A549 (cell line): ENCODE measurements at regions of chr19 and their contacts with region 1.

Region 1: DNA sequence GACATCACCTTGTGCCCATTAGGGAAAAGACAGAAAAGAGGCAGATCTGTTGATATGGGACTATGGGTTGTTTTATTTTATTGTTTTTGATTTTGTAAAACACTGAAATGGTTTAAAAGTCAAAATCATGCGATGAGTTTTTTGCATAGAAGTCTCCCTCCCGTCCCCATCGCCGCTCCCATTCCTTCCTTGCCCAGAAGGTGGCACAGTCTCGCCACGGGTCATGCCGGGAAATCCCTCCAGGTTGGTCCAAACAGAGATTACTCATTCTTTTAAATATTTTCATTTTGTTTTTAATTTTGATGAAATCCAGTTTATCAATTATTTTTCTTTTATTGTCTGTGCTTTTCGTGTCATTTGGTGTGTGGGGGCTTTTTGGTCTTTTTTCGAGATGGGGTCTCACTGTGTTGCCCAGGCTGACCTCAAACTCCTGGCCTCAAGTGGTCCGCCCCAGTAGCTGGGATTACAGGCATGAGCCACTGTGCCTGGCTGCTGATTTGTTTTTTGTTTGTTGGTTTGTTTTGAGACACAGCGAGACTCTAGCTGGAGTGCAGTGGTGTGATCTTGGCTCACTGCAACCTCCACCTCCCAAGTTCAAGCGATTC is 9.2 kb downstream of the PGPEP1 start:
- DNase-seq: peak; percentile 61 to 69
- ATAC-seq: peak; percentile 68 to 87; a peak in 4 of 6 replicates
- H3K4me3 ChIP-seq: no peak overlapping the region
- H3K27ac ChIP-seq: peak overlapping the region; percentile 67 to 77
- H3K4me1 ChIP-seq: peaks cover 7% of the 10 kb centered on the region; the same call in 1 of the 3 replicates
- CTCF ChIP-seq: peak; percentile 84
- EP300 ChIP-seq: no peak
- POLR2A ChIP-seq: no peak
- RAD21 ChIP-seq: peak; percentile 93

Region 2: GRCh38 chr19:18333662-18334389 is 15.8 kb before region 1 on chr19:
- CTCF ChIA-PET with region 1: interaction called, 24 read pairs
- POLR2A ChIA-PET with region 1: no interaction called
- DNase-seq: no peak
- ATAC-seq: no peak
- H3K4me3 ChIP-seq: no peak overlapping the region
- H3K27ac ChIP-seq: no peak overlapping the region
- H3K4me1 ChIP-seq: peaks cover 13% of the 10 kb centered on the region
- CTCF ChIP-seq: no peak
- EP300 ChIP-seq: no peak
- POLR2A ChIP-seq: no peak
- RAD21 ChIP-seq: no peak

Region 3: GRCh38 chr19:18364826-18365528 is 15.4 kb after region 1 on chr19:
- CTCF ChIA-PET with region 1: interaction called, 66 read pairs
- POLR2A ChIA-PET with region 1: no interaction called
- DNase-seq: peak; percentile 71 to 98
- ATAC-seq: peak; percentile 82 to 83
- H3K4me3 ChIP-seq: no peak overlapping the region
- H3K27ac ChIP-seq: peak overlapping the region; percentile 97 to 99
- H3K4me1 ChIP-seq: peaks cover 45% of the 10 kb centered on the region
- CTCF ChIP-seq: no peak
- EP300 ChIP-seq: peak; percentile 97 to 98
- POLR2A ChIP-seq: no peak
- RAD21 ChIP-seq: no peak; a peak in 2 of 5 replicates

Region 4: DNA sequence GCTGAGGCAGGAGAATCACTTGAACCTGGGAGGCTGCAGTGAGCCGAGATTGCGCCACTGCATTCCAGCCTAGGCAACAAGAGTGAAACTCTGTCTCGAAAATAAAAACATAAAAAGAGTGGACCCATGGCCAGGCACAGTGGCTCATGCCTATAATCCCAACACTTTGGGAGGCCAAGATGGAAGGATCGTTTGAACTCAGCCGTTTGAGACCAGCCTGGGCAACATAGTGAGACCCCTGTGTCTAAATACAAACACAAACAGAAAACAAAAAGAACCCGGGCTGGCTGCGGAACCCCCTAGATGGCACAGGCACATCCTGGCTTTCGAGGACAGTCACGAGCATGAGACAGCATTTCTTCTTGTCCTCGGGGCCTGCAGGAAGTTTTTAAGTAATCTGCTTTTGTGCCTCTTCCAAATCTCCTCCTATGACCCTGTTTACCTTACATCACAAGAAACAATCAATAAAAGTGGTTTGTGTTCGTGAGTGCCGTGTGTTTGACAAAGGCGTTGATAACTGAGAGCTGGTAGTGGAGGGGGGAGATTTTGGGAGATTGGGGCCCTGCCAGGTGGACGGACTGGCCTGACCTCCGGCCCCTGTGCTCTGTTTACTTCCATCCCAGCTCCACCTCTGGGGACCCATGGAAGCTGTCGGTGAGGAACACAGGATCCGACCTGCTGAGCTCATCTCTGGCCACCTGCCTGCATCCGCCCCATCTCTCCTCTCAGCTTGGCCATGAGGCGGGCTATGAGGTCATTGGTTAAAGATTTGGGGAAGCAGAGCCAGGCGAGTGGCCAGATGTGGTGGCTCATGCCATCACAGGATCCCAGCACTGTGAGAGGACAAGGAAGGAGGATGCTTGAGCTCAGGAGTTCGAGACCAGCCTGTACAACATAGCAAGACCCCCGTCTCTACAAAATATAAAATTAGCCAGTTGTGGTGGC is 30.4 kb after region 1 on chr19:
- CTCF ChIA-PET with region 1: interaction called, 14 read pairs
- POLR2A ChIA-PET with region 1: interaction called, 4 read pairs
- DNase-seq: peak; percentile 84 to 99
- ATAC-seq: peak; percentile 93 to 98
- H3K4me3 ChIP-seq: no peak overlapping the region
- H3K27ac ChIP-seq: peak overlapping the region; percentile 99 to 100
- H3K4me1 ChIP-seq: peaks cover 73% of the 10 kb centered on the region
- CTCF ChIP-seq: no peak
- EP300 ChIP-seq: peak; percentile 96 to 98
- POLR2A ChIP-seq: no peak
- RAD21 ChIP-seq: peak in 1 of 2 experiments; percentile 24; a peak in 1 of 5 replicates

Region 5: DNA sequence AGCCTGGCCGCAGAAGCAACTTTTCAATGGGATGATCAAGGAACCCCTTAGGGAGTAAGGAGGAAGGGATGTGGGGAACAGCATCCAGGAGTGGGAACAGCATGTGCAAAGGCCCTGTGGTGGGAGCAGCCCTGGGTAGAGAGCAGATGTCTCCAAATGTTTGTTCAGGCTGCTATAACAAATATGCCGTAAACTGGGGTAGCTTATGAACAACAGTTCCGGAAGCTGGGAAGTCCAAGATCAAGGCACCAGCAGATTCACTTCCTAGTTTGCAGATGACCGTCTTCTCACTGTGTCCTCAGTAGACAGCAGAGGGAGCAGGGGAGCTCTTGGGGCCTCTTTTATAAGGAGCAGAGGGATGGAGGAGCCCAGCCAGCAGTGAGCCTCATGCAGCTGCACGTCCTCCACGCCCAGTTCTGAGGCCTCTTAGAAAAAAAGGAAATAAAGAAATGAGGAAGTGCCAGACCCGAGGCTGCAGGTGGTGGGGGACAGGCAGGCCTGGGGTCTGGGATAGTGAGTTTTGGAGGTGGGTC is 52.0 kb after region 1 on chr19:
- CTCF ChIA-PET with region 1: interaction called, 17 read pairs
- POLR2A ChIA-PET with region 1: interaction called, 6 read pairs
- DNase-seq: peak in 1 of 2 experiments; percentile 85
- ATAC-seq: peak; percentile 91 to 94
- H3K4me3 ChIP-seq: no peak overlapping the region
- H3K27ac ChIP-seq: peak overlapping the region; percentile 83 to 91
- H3K4me1 ChIP-seq: peaks cover 39% of the 10 kb centered on the region
- CTCF ChIP-seq: peak; percentile 45
- EP300 ChIP-seq: no peak
- POLR2A ChIP-seq: no peak
- RAD21 ChIP-seq: peak; percentile 29 to 34; a peak in 3 of 5 replicates

Region 6: GRCh38 chr19:18408053-18408476 is 58.4 kb after region 1 on chr19:
- CTCF ChIA-PET with region 1: interaction called, 109 read pairs
- POLR2A ChIA-PET with region 1: interaction called, 6 read pairs
- DNase-seq: no peak
- ATAC-seq: peak in 1 of 2 experiments; percentile 33; a peak in 1 of 6 replicates
- H3K4me3 ChIP-seq: no peak overlapping the region
- H3K27ac ChIP-seq: peak overlapping the region in 1 of 2 experiments; percentile 87; a peak in 3 of 6 replicates
- H3K4me1 ChIP-seq: peaks cover 11% of the 10 kb centered on the region; the same call in 2 of the 3 replicates
- CTCF ChIP-seq: 0 out of 3 replicates have a peak, but pooled peaks have one; percentile 18
- EP300 ChIP-seq: no peak
- POLR2A ChIP-seq: no peak
- RAD21 ChIP-seq: peak; percentile 18 to 46; a peak in 2 of 5 replicates

Region 7: DNA sequence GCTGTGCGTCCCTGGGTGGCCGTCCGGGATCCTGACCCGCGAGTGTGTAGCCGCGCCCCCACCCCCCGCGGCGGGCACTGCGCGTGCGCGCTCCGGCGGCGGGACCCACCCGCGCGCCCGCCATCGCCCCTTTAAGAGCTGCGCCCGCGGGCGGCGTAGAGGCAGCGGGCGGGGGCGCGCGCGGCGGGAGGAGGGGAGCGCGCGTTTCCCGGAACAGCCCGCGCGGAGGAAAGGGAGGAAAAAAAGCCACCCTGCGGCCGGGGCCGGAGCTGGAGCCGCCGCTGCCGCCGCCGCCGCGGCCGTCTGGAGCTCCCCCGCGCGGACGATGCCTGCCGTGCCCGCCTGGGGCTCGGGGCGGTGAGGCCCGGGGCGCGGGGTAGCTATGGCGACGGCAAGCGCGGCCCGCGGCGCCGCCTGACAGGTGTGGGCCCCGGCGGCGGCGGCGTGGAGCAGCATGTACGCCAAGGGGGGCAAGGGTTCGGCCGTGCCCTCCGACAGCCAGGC is 69.6 kb after region 1 on chr19 and contains the start of gene SSBP4:
- CTCF ChIA-PET with region 1: interaction called, 109 read pairs
- POLR2A ChIA-PET with region 1: no interaction called
- DNase-seq: peak in 1 of 2 experiments; percentile 79
- ATAC-seq: peak in 1 of 2 experiments; percentile 25; a peak in 2 of 6 replicates
- H3K4me3 ChIP-seq: peak within 1 kb of the TSS; percentile 77
- H3K27ac ChIP-seq: peak within 1 kb of the TSS; percentile 96 to 100
- H3K4me1 ChIP-seq: peaks cover 52% of the 10 kb centered on the region
- CTCF ChIP-seq: peak; percentile 32; the same call in 2 of the 3 replicates
- EP300 ChIP-seq: no peak
- POLR2A ChIP-seq: no peak
- RAD21 ChIP-seq: no peak
- polyA plus RNA-seq, gene SSBP4: 5.4 and 6.9 TPM in 2 replicates